Caco-2 (cell line): ENCODE measurements at regions of chr10 and their contacts with region 1.

Region 1: GRCh38 chr10:80132299-80133139 is at the start of gene PLAC9:
- DNase-seq: no peak
- H3K4me3 ChIP-seq: no peak within 1 kb of the TSS
- H3K4me3 Mint-ChIP-seq: no peak within 1 kb of the TSS
- H3K27ac Mint-ChIP-seq: peak within 1 kb of the TSS; percentile 42
- H3K4me1 ChIP-seq: peaks cover 8% of the 10 kb centered on the region
- H3K4me1 Mint-ChIP-seq: peaks cover 16% of the 10 kb centered on the region
- H3K27me3 ChIP-seq: no peaks in the 10 kb centered on the region
- H3K27me3 Mint-ChIP-seq: no peaks in the 10 kb centered on the region
- CTCF ChIP-seq: no peak
- total RNA-seq, gene PLAC9: not detected in 2 replicates

Region 2: GRCh38 chr10:80064120-80064886 is 68.2 kb before region 1 on chr10:
- CTCF ChIA-PET with region 1: no interaction called
- POLR2A ChIA-PET with region 1: no interaction called
- intact Hi-C with region 1: loop called (anchors 2 kb)
- DNase-seq: no peak
- H3K4me3 ChIP-seq: no peak overlapping the region
- H3K4me3 Mint-ChIP-seq: no peak overlapping the region
- H3K27ac Mint-ChIP-seq: no peak overlapping the region
- H3K4me1 ChIP-seq: peaks cover 20% of the 10 kb centered on the region
- H3K4me1 Mint-ChIP-seq: peaks cover 17% of the 10 kb centered on the region
- H3K27me3 ChIP-seq: no peaks in the 10 kb centered on the region
- H3K27me3 Mint-ChIP-seq: no peaks in the 10 kb centered on the region
- CTCF ChIP-seq: no peak

Region 3: DNA sequence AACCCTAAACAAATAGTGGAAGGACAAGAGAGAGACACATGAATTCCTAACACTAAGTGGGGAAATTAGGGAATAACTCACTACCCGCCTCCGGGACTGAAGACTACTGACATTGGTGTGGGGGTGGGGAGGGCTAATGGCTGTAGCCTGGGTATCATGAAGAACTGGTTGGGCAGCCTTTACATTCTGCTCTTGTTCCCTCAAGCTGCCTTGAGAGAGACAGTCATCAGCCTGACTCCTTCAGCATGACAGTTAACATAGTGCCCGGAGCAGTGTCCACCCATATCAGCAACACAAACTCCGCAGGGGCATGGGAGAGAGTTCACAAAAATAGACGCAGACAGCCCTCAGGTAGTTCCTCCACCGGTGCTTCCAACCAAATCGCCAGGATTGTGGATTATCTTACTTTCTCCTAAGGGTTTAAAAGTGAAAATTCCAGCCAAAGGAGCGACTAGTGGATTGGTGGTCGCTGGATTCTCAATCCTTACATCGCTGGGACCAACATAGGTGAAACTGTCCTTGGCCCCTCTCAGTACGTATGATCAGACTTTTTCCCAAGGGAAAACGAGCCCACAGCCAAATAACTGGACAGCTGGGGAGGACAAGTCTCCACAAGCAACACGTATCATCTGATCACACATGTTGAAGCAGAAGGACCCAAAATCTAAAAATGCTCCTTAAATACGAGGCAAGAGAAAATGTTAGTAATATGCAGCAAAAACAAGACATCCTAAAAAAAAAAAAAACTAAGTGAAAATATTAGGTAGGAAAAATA is 31.4 kb before region 1 on chr10:
- CTCF ChIA-PET with region 1: no interaction called
- POLR2A ChIA-PET with region 1: no interaction called
- intact Hi-C with region 1: no loop called
- DNase-seq: peak; percentile 44 to 64
- H3K4me3 ChIP-seq: no peak overlapping the region
- H3K4me3 Mint-ChIP-seq: no peak overlapping the region
- H3K27ac Mint-ChIP-seq: peak overlapping the region; percentile 25
- H3K4me1 ChIP-seq: peaks cover 5% of the 10 kb centered on the region; the same call in 1 of the 2 replicates
- H3K4me1 Mint-ChIP-seq: peaks cover 16% of the 10 kb centered on the region
- H3K27me3 ChIP-seq: no peaks in the 10 kb centered on the region
- H3K27me3 Mint-ChIP-seq: no peaks in the 10 kb centered on the region
- CTCF ChIP-seq: no peak